Psoas muscle (tissue), 8 donors: ENCODE measurements at regions of chr1 and their contacts with region 1.

Region 1: GRCh38 chr1:211247921-211248320 is 11.2 kb upstream of the RCOR3 start:
- DNase-seq: no peak
- ATAC-seq: no peak
- H3K4me3 ChIP-seq: no peak overlapping the region
- H3K27ac ChIP-seq: no peak overlapping the region
- H3K4me1 ChIP-seq: no peaks in the 10 kb centered on the region
- H3K27me3 ChIP-seq: no peaks in the 10 kb centered on the region
- CTCF ChIP-seq: no peak

Region 2: GRCh38 chr1:211174375-211174774 is 73.5 kb before region 1 on chr1:
- intact Hi-C with region 1: loop called in 1 of 2 experiments (anchors 10 kb)
- DNase-seq: no peak
- ATAC-seq: no peak
- H3K4me3 ChIP-seq: no peak overlapping the region
- H3K27ac ChIP-seq: no peak overlapping the region
- H3K4me1 ChIP-seq: no peaks in the 10 kb centered on the region
- H3K27me3 ChIP-seq: no peaks in the 10 kb centered on the region
- CTCF ChIP-seq: no peak